ENCODE measurements at regions of chr13 and their contacts with region 1.

Region 1: DNA sequence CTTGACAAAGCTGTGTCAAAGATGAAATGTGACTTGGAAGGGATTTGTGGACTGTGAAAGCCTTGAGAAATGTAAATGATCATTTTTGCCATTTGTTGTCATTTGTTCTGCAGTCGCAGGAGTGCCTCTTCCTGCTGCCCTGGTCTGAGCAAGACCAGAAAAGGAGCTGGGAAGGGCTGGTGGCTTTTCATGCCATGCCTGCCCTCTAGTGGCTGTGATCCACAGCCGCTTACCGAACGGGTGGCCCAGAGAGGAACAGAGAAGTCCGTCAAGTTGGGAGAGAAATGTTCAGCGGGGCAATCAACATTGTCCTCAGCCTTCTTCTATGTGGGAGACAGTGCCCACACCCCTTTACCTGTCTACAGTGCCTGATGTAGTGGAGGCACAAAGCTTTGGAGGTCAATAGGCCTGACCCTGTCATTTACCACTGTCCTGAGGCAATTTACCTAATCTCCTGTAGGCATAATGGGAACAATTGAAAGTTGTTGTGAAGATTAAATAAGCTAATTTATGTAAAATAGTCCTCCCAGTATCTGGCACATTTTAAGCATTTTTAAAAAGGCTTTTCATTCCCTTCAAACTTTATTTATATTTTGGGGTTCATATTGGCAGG is 224.4 kb downstream of the B3GLCT start:
- DNase-seq: peak; percentile 74
- ATAC-seq: peak; percentile 100
- H3K4me3 ChIP-seq: no peak overlapping the region
- H3K27ac ChIP-seq: no peak overlapping the region
- H3K4me1 ChIP-seq: peaks cover 0 to 3% of the 10 kb centered on the region in 2 experiments; a peak in 1 of 4 replicates
- H3K27me3 ChIP-seq: 0 out of 2 replicates have a peak, but pooled peaks cover 4% of the 10 kb centered on the region
- CTCF ChIP-seq: peak; percentile 72 to 94 (median 93)
- POLR2A ChIP-seq: no peak
- RAD21 ChIP-seq: peak; percentile 87

Region 2: GRCh38 chr13:31236211-31236786 is 187.9 kb before region 1 on chr13:
- CTCF ChIA-PET with region 1: interaction called, 59 read pairs
- POLR2A ChIA-PET with region 1: interaction called, 3 read pairs
- RAD21 ChIA-PET with region 1: interaction called, 6 to 7 read pairs
- intact Hi-C with region 1: loop called (anchors 1 kb)
- DNase-seq: peak; percentile 15
- ATAC-seq: peak; percentile 73
- H3K4me3 ChIP-seq: no peak overlapping the region
- H3K27ac ChIP-seq: no peak overlapping the region
- H3K4me1 ChIP-seq: no peaks in the 10 kb centered on the region
- H3K27me3 ChIP-seq: no peaks in the 10 kb centered on the region
- CTCF ChIP-seq: peak; percentile 59 to 88 (median 73); a peak in 5 of 6 replicates
- POLR2A ChIP-seq: no peak
- RAD21 ChIP-seq: peak; percentile 62

Measured in HCT116 (cell line).